ENCODE measurements at regions of chr2 and their contacts with region 1.

Region 1: GRCh38 chr2:64653349-64654062 is at the start of gene SERTAD2:
- DNase-seq: peak; percentile 87
- H3K4me3 Mint-ChIP-seq: peak within 1 kb of the TSS; percentile 88
- H3K27ac Mint-ChIP-seq: peak within 1 kb of the TSS; percentile 91
- H3K4me1 Mint-ChIP-seq: peaks cover 65% of the 10 kb centered on the region
- H3K27me3 Mint-ChIP-seq: no peaks in the 10 kb centered on the region
- total RNA-seq, gene SERTAD2: 16.9 to 18.7 TPM

Region 2: GRCh38 chr2:64534363-64534762 is 119.1 kb before region 1 on chr2:
- CTCF ChIA-PET with region 1: no interaction called
- POLR2A ChIA-PET with region 1: no interaction called
- DNase-seq: no peak
- H3K4me3 Mint-ChIP-seq: no peak overlapping the region
- H3K27ac Mint-ChIP-seq: no peak overlapping the region
- H3K4me1 Mint-ChIP-seq: peaks cover 48% of the 10 kb centered on the region
- H3K27me3 Mint-ChIP-seq: no peaks in the 10 kb centered on the region

Region 3: GRCh38 chr2:64565949-64566710 is 87.4 kb before region 1 on chr2:
- CTCF ChIA-PET with region 1: no interaction called
- POLR2A ChIA-PET with region 1: no interaction called
- DNase-seq: no peak
- H3K4me3 Mint-ChIP-seq: no peak overlapping the region
- H3K27ac Mint-ChIP-seq: peak overlapping the region; percentile 36
- H3K4me1 Mint-ChIP-seq: peaks cover 38% of the 10 kb centered on the region
- H3K27me3 Mint-ChIP-seq: no peaks in the 10 kb centered on the region

Region 4: GRCh38 chr2:64609227-64609941 is 44.1 kb before region 1 on chr2:
- CTCF ChIA-PET with region 1: interaction called, 32 read pairs
- POLR2A ChIA-PET with region 1: no interaction called
- DNase-seq: peak; percentile 60
- H3K4me3 Mint-ChIP-seq: peak overlapping the region; percentile 69
- H3K27ac Mint-ChIP-seq: peak overlapping the region; percentile 81
- H3K4me1 Mint-ChIP-seq: peaks cover 25% of the 10 kb centered on the region
- H3K27me3 Mint-ChIP-seq: peaks cover 17% of the 10 kb centered on the region

Region 5: GRCh38 chr2:64695721-64696261 is 42.3 kb after region 1 on chr2:
- CTCF ChIA-PET with region 1: interaction called, 12 read pairs
- POLR2A ChIA-PET with region 1: no interaction called
- DNase-seq: no peak
- H3K4me3 Mint-ChIP-seq: no peak overlapping the region
- H3K27ac Mint-ChIP-seq: no peak overlapping the region
- H3K4me1 Mint-ChIP-seq: peaks cover 49% of the 10 kb centered on the region
- H3K27me3 Mint-ChIP-seq: no peaks in the 10 kb centered on the region

Region 6: GRCh38 chr2:64750817-64751285 is 97.3 kb after region 1 on chr2:
- CTCF ChIA-PET with region 1: interaction called, 29 read pairs
- POLR2A ChIA-PET with region 1: interaction called, 8 read pairs
- DNase-seq: peak; percentile 97
- H3K4me3 Mint-ChIP-seq: peak overlapping the region; percentile 98
- H3K27ac Mint-ChIP-seq: peak overlapping the region; percentile 98
- H3K4me1 Mint-ChIP-seq: peaks cover 26% of the 10 kb centered on the region
- H3K27me3 Mint-ChIP-seq: no peaks in the 10 kb centered on the region

Measured in activated CD4-positive, alpha-beta T cell treated with anti-CD3 and anti-CD28 coated beads, Interleukin-2, amount 10 ng/mL, durations not matched to agents 7 days and 5 days (primary cell).